Heart left ventricle (tissue), 16 donors: ENCODE measurements at regions of chr19 and their contacts with region 1.

Region 1: DNA sequence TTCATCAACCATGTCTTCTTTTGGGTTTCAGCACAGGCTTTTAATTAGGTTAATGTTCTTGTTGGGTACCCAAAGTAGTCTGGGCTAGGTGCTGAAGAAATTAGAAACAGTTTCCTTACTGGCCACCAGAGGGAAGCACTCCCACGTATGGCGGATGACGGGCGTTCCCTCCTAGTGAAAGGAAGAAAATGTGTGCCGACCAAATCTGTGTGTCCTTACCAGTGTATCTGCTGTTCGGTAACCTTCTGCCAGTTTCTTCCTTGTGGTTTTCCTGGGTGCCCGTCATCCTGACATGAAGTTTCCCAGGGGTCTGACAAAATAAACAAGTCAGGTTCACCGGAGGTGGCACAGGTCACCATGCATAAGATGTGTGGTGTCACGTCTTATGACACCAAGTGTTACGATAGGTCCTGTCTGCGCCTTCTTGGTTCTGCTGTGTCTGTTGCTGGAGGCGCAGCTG is 6.0 kb upstream of the WDR88 start:
- DNase-seq: peak in 4 of 5 donors; percentile 35 to 50 (median 43)
- ATAC-seq: peak; percentile 63 to 88 (median 83)
- H3K4me3 ChIP-seq: no peak overlapping the region
- H3K27ac ChIP-seq: no peak overlapping the region
- H3K4me1 ChIP-seq: peaks cover 0 to 5% (median 0%) of the 10 kb centered on the region in 12 donors
- H3K27me3 ChIP-seq: no peaks in the 10 kb centered on the region
- CTCF ChIP-seq: peak; percentile 71 to 87 (median 82)
- POLR2A ChIP-seq: no peak

Region 2: GRCh38 chr19:32924203-32924930 is 201.6 kb before region 1 on chr19:
- intact Hi-C with region 1: no loop called
- DNase-seq: no peak
- ATAC-seq: no peak
- H3K4me3 ChIP-seq: no peak overlapping the region
- H3K27ac ChIP-seq: no peak overlapping the region
- H3K4me1 ChIP-seq: no peaks in the 10 kb centered on the region
- H3K27me3 ChIP-seq: no peaks in the 10 kb centered on the region
- CTCF ChIP-seq: no peak
- POLR2A ChIP-seq: no peak

Region 3: GRCh38 chr19:33080761-33081681 is 44.9 kb before region 1 on chr19 and contains the start of gene GPATCH1:
- intact Hi-C with region 1: no loop called
- DNase-seq: peak; percentile 89 to 93 (median 91)
- ATAC-seq: peak; percentile 93 to 99 (median 97)
- H3K4me3 ChIP-seq: peak within 1 kb of the TSS; percentile 71 to 97 (median 82)
- H3K27ac ChIP-seq: peak within 1 kb of the TSS in 11 of 12 donors; percentile 26 to 85 (median 76)
- H3K4me1 ChIP-seq: peaks cover 0 to 26% (median 11%) of the 10 kb centered on the region in 12 donors
- H3K27me3 ChIP-seq: no peaks in the 10 kb centered on the region
- CTCF ChIP-seq: peak in 1 of 12 donors; percentile 11
- POLR2A ChIP-seq: peak in 1 of 2 donors; percentile 42
- total RNA-seq, gene GPATCH1: 3.4 to 6.7 (median 6.4) TPM

Region 4: GRCh38 chr19:33176670-33177416 is 50.9 kb after region 1 on chr19:
- intact Hi-C with region 1: loop called in 4 of 10 experiments (anchors 5 to 10 kb)
- DNase-seq: peak; percentile 94 to 97 (median 97)
- ATAC-seq: peak; percentile 94 to 96 (median 95)
- H3K4me3 ChIP-seq: peak overlapping the region; percentile 64 to 99 (median 88)
- H3K27ac ChIP-seq: peak overlapping the region; percentile 85 to 98 (median 94)
- H3K4me1 ChIP-seq: peaks cover 0 to 32% (median 21%) of the 10 kb centered on the region in 12 donors
- H3K27me3 ChIP-seq: no peaks in the 10 kb centered on the region
- CTCF ChIP-seq: peak in 3 of 12 donors; percentile 10 to 39 (median 19)
- POLR2A ChIP-seq: peak in 1 of 2 donors; percentile 78

Region 5: GRCh38 chr19:33186431-33187182 is 60.6 kb after region 1 on chr19:
- intact Hi-C with region 1: loop called in 4 of 10 experiments (anchors 5 to 10 kb)
- DNase-seq: peak in 2 of 5 donors; percentile 7 to 18
- ATAC-seq: peak in 1 of 4 donors; percentile 27
- H3K4me3 ChIP-seq: no peak overlapping the region
- H3K27ac ChIP-seq: no peak overlapping the region
- H3K4me1 ChIP-seq: peaks cover 0 to 6% (median 0%) of the 10 kb centered on the region in 12 donors
- H3K27me3 ChIP-seq: no peaks in the 10 kb centered on the region
- CTCF ChIP-seq: no peak
- POLR2A ChIP-seq: no peak